ENCODE measurements at regions of chr18 and their contacts with region 1.

Region 1: DNA sequence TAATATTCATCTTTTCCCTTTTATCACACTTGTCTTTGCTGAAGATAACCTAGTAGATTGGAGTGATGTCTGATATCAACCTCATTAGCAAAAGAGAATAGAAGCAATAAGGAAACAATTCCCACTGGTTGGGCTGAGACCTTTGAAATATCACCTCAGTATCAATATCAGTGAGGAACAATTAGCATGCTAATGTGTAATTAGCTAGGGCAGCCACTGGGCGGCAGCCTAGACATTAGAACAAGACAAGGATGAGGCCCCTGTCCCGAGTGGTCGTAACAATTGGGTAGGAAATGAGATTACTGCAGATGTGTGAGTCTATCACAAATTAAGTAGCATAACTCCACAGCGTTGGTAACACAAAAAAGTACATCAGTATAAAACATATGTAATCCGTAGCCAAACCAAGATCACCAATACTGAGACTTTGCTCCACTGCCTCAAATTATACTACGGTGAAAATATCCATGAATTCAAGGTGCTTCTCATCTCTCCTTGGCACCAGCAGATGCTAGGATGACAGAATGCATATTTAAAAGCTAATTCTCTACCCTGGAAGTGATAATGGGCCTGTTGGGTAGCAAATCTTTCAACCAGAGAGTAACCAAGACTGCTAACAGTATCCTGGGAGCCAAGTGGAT is 99.1 kb downstream of the ALPK2 start:
- DNase-seq: peak; percentile 49
- CTCF ChIP-seq: peak; percentile 87

Region 2: DNA sequence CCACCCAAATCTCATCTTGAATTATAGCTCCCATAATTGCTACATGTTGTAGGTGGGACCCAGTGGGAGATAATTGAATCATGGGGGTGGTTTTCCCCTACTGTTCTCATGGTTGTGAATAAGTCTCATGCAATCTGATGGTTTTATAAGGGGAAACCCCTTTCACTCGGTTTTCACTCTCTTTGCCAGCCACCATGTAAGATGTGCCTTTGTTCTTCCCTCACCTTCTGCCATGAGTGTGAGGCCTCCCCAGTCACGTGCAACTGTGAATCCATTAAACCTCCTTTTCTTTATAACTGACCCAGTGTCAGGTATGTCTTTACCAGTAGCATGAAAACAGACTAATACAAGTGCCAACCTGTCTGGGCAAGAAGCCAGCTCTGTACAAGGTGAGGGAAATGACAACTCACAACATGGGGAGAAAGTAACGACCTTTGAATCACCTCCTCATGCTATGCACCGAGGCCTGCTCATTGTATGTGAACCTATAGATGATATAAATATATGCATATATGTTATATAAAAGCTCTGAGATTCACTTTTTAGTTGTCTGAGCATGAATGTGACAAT is 63.1 kb before region 1 on chr18:
- in situ Hi-C with region 1: no loop called
- DNase-seq: no peak
- CTCF ChIP-seq: no peak

Region 3: DNA sequence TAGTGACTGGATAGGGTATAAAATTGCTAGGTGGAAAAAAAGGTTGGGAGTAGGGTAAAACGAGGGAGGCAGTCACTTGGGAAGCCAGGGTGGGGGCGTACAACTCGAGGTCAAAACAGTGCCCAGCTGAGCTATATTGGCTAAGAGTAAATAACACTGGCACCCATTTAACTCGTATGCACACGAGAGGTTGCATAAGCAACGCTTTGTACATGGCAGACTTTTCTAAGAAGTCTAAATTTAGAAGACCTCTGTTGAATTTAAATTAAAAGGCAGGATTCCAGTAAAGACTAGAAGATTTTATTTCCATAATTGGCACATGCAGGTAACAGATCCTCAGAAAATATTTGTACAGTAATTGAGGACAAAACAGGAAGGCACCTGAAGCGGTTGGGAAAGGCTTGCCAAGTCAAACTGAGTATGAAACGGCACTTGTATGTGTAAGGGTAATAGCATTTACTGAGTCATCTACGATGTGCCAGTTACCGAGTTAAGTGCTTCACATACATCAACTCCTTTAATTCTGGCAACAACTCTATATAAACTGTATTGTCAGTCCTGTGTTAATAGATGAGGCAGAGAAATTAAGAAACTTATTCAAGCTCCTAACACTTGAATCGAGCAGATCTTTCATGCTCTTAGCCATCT is 140.0 kb after region 1 on chr18:
- in situ Hi-C with region 1: loop called (anchors 10 kb)
- DNase-seq: no peak
- CTCF ChIP-seq: no peak

Region 4: GRCh38 chr18:58768293-58768974 is 238.6 kb after region 1 on chr18:
- in situ Hi-C with region 1: loop called (anchors 5 kb)
- DNase-seq: peak; percentile 85
- CTCF ChIP-seq: peak; percentile 93

Region 5: DNA sequence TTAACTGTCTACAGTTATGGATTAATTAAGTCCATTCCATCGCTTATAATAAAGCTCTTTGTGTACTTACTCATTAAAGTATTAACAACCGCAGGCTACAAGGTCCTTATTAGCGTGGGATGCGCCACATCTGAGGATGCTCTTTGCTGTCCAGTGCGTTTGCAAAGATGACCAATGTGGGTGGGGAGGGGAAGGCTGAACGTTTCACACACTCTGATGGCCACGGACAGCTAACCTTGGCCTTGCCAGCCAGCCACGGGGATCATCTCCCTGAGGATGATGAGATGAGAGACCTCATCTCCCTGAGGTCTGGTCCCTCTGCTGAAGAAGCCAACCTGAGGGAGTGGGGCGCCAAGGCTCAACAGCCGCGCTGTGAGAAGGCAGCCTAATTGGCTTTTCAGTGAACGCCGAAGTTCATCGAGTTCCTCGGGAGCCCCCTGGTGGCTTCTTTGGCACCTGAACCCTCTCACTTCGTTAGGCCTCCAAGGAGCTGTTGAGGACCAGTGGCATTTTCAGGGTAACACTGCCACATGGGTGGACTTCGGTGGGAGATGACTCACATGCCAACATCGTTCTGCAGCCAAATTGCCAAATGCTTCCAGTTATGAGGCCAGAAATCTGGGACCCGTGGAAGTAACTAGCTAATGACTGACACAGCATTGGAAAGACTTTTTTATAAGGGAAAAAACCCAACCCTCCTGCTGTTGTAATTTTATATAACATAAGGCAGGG is 540.5 kb after region 1 on chr18:
- in situ Hi-C with region 1: loop called (anchors 25 kb)
- DNase-seq: peak; percentile 73
- CTCF ChIP-seq: peak; percentile 86

Measured in GM13977 (cell line).